Panc1 (cell line): ENCODE measurements at regions of chr1 and their contacts with region 1.

Region 1: DNA sequence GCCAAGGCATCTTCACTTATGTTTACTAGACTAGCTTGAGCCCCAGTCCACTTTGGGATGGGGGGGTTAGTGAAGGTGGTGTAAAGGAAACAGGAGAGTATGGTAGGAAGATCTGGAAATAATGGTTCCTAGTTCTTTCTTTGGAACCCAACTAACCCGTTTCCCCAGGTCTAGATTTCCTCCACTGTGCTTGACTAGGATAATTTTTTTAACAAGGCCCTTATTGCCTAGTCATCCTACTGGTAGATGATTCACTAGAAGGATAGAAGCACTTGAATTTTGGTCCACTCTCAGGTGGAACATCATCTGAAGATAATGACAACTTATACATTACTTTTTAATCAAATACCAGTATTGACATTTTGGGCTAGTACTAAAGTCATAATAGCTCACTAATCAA is 45.9 kb upstream of the MYOCOS start:
- DNase-seq: no peak
- ATAC-seq: no peak
- H3K4me3 ChIP-seq: no peak overlapping the region
- H3K27ac ChIP-seq: no peak overlapping the region
- H3K4me1 ChIP-seq: no peaks in the 10 kb centered on the region
- H3K27me3 ChIP-seq: no peaks in the 10 kb centered on the region
- CTCF ChIP-seq: no peak

Region 2: GRCh38 chr1:171344473-171344820 is 231.7 kb before region 1 on chr1:
- CTCF ChIA-PET with region 1: no interaction called
- POLR2A ChIA-PET with region 1: no interaction called
- in situ Hi-C with region 1: no loop called
- intact Hi-C with region 1: no loop called
- DNase-seq: no peak
- ATAC-seq: no peak
- H3K4me3 ChIP-seq: no peak overlapping the region
- H3K27ac ChIP-seq: no peak overlapping the region
- H3K4me1 ChIP-seq: no peaks in the 10 kb centered on the region
- H3K27me3 ChIP-seq: no peaks in the 10 kb centered on the region
- CTCF ChIP-seq: no peak

Region 3: DNA sequence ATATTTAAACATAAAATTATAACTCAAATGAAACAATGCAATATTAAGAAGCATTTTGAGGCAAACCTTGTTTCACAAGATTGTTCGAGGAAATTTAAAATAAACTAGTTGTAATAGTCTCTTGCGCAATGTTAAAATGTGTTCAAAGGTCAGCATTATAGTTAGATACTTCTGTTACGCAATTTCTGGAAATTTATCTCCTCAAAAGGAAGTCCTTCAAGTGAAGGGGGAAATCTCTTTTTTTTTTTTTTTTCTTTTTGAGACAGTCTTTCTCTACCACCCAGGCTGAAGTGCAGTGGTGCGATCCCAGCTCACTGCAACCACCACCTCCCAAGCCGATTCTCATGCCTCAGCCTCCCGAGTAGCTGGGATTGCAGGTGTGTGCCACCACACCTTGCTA is 210.0 kb before region 1 on chr1:
- CTCF ChIA-PET with region 1: no interaction called
- POLR2A ChIA-PET with region 1: no interaction called
- in situ Hi-C with region 1: no loop called
- intact Hi-C with region 1: no loop called
- DNase-seq: no peak
- ATAC-seq: no peak
- H3K4me3 ChIP-seq: no peak overlapping the region
- H3K27ac ChIP-seq: no peak overlapping the region
- H3K4me1 ChIP-seq: no peaks in the 10 kb centered on the region
- H3K27me3 ChIP-seq: no peaks in the 10 kb centered on the region
- CTCF ChIP-seq: no peak

Region 4: DNA sequence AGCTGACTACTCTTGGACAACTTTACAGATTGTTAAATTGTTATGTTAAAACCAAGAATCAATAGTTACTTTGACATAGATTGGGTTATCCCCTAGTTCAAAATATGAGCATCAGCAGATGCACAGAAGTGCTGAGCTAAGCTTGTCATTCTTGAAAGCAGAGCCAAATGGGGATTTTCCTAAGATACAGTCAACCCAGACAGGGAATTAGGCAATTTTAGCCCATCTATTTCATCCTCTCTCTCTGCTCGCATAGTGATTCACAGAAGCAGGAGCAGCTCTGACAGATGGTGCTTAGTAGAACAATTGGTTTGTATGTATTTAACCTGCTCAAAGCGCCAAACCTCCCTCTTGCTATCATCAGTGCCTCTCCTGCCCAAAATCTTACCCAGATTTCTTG is 118.7 kb before region 1 on chr1:
- CTCF ChIA-PET with region 1: no interaction called
- POLR2A ChIA-PET with region 1: no interaction called
- in situ Hi-C with region 1: no loop called
- intact Hi-C with region 1: no loop called
- DNase-seq: no peak
- ATAC-seq: no peak
- H3K4me3 ChIP-seq: no peak overlapping the region
- H3K27ac ChIP-seq: no peak overlapping the region
- H3K4me1 ChIP-seq: no peaks in the 10 kb centered on the region
- H3K27me3 ChIP-seq: peaks cover 2% of the 10 kb centered on the region; the same call in 1 of the 2 replicates
- CTCF ChIP-seq: no peak

Region 5: GRCh38 chr1:171769171-171769570 is 193.0 kb after region 1 on chr1:
- CTCF ChIA-PET with region 1: no interaction called
- POLR2A ChIA-PET with region 1: no interaction called
- in situ Hi-C with region 1: no loop called
- intact Hi-C with region 1: no loop called
- DNase-seq: no peak
- ATAC-seq: no peak
- H3K4me3 ChIP-seq: no peak overlapping the region
- H3K27ac ChIP-seq: no peak overlapping the region
- H3K4me1 ChIP-seq: no peaks in the 10 kb centered on the region
- H3K27me3 ChIP-seq: no peaks in the 10 kb centered on the region
- CTCF ChIP-seq: no peak

Region 6: GRCh38 chr1:171984850-171985485 is 408.8 kb after region 1 on chr1:
- CTCF ChIA-PET with region 1: no interaction called
- POLR2A ChIA-PET with region 1: interaction called, 11 read pairs
- in situ Hi-C with region 1: no loop called
- intact Hi-C with region 1: no loop called
- DNase-seq: no peak
- ATAC-seq: peak; percentile 68; the same call in 1 of the 2 replicates
- H3K4me3 ChIP-seq: no peak overlapping the region
- H3K27ac ChIP-seq: peak overlapping the region; percentile 32; the same call in 1 of the 2 replicates
- H3K4me1 ChIP-seq: 0 out of 2 replicates have a peak, but pooled peaks cover 6% of the 10 kb centered on the region
- H3K27me3 ChIP-seq: no peaks in the 10 kb centered on the region
- CTCF ChIP-seq: peak; percentile 73; the same call in 1 of the 2 replicates